B cell (primary cell): ENCODE measurements at regions of chr7 and their contacts with region 1.

Region 1: GRCh38 chr7:141014524-141015395 is at the start of gene MRPS33:
- DNase-seq: peak; percentile 98
- ATAC-seq: peak; percentile 98
- H3K4me3 ChIP-seq: peak within 1 kb of the TSS; percentile 64 to 83 (median 74)
- H3K4me3 Mint-ChIP-seq: peak within 1 kb of the TSS; percentile 100
- H3K27ac ChIP-seq: peak within 1 kb of the TSS; percentile 96 to 99
- H3K27ac Mint-ChIP-seq: peak within 1 kb of the TSS; percentile 100
- H3K4me1 ChIP-seq: peaks cover 10 to 11% of the 10 kb centered on the region in 2 donors
- H3K4me1 Mint-ChIP-seq: peaks cover 27% of the 10 kb centered on the region
- H3K27me3 ChIP-seq: peaks cover 0 to 7% (median 0%) of the 10 kb centered on the region in 4 experiments
- H3K27me3 Mint-ChIP-seq: peaks cover 16% of the 10 kb centered on the region
- CTCF ChIP-seq: peak; percentile 69
- total RNA-seq, gene MRPS33: 25.3 and 30.1 TPM in 2 replicates

Region 2: GRCh38 chr7:139598445-139599049 is 1416.2 kb before region 1 on chr7:
- CTCF ChIA-PET with region 1: no interaction called
- POLR2A ChIA-PET with region 1: no interaction called
- intact Hi-C with region 1: no loop called
- DNase-seq: no peak
- ATAC-seq: no peak
- H3K4me3 ChIP-seq: no peak overlapping the region
- H3K4me3 Mint-ChIP-seq: no peak overlapping the region
- H3K27ac ChIP-seq: no peak overlapping the region
- H3K27ac Mint-ChIP-seq: no peak overlapping the region
- H3K4me1 ChIP-seq: no peaks in the 10 kb centered on the region
- H3K4me1 Mint-ChIP-seq: no peaks in the 10 kb centered on the region
- H3K27me3 ChIP-seq: no peaks in the 10 kb centered on the region
- H3K27me3 Mint-ChIP-seq: no peaks in the 10 kb centered on the region
- CTCF ChIP-seq: no peak

Region 3: GRCh38 chr7:140397784-140398750 is 616.7 kb before region 1 on chr7 and contains the start of gene SLC37A3:
- CTCF ChIA-PET with region 1: no interaction called
- POLR2A ChIA-PET with region 1: no interaction called
- intact Hi-C with region 1: loop called (anchors 2 kb)
- DNase-seq: peak; percentile 86
- ATAC-seq: peak; percentile 97
- H3K4me3 ChIP-seq: peak within 1 kb of the TSS; percentile 62 to 69 (median 67)
- H3K4me3 Mint-ChIP-seq: peak within 1 kb of the TSS; percentile 98
- H3K27ac ChIP-seq: peak within 1 kb of the TSS in 1 of 2 donors; percentile 75
- H3K27ac Mint-ChIP-seq: peak within 1 kb of the TSS; percentile 83
- H3K4me1 ChIP-seq: peaks cover 7 to 11% of the 10 kb centered on the region in 2 donors
- H3K4me1 Mint-ChIP-seq: peaks cover 13% of the 10 kb centered on the region
- H3K27me3 ChIP-seq: no peaks in the 10 kb centered on the region
- H3K27me3 Mint-ChIP-seq: peaks cover 3% of the 10 kb centered on the region
- CTCF ChIP-seq: no peak
- total RNA-seq, gene SLC37A3: 20.1 TPM in 2 replicates

Region 4: DNA sequence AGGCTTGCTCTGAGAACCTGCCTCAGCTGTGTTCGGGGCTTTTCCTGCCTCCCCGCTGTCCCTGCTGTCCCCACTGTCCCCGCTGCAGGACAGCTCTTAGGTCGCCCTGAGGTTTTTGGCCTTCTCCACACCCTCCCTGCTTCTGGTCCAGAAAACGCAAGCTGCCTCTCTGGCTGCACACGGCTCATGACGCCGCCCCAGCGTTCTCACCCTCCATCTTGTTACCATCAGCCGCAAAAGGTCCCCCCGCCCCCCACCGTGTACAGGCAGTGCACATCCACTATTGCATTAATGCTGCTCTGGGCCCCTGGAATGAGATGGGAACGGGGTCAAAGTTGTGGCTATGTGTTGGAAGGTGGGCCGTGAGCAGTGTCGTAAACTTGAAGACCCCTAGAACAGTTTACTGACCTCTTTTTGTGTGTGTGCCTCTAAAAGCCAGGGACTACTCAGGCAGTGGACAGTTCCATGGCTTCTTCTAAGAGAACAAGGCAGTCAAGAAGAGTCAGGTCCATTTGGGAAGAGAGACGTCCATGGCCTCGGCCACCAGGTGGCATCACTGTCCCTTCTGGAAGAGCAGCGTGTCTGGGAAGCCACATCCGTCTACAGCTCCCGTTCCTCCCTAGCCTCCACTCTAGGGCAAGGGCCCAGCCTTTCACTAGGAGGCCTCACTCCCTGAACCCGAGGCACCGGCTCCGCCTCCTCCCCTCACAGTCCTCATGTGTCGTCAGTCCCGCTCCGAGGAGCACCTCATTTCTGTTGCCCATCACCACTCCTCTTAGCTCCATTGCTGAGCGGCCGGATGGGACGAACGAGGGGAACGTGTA is 497.0 kb before region 1 on chr7:
- CTCF ChIA-PET with region 1: interaction called, 54 read pairs
- POLR2A ChIA-PET with region 1: no interaction called
- intact Hi-C with region 1: loop called (anchors 1 kb)
- DNase-seq: peak; percentile 76
- ATAC-seq: peak; percentile 67
- H3K4me3 ChIP-seq: no peak overlapping the region
- H3K4me3 Mint-ChIP-seq: peak overlapping the region; percentile 62
- H3K27ac ChIP-seq: no peak overlapping the region
- H3K27ac Mint-ChIP-seq: no peak overlapping the region
- H3K4me1 ChIP-seq: peaks cover 0 to 5% of the 10 kb centered on the region in 2 donors
- H3K4me1 Mint-ChIP-seq: peaks cover 4% of the 10 kb centered on the region
- H3K27me3 ChIP-seq: peaks cover 0 to 3% (median 0%) of the 10 kb centered on the region in 4 experiments
- H3K27me3 Mint-ChIP-seq: peaks cover 21% of the 10 kb centered on the region
- CTCF ChIP-seq: peak; percentile 75

Region 5: DNA sequence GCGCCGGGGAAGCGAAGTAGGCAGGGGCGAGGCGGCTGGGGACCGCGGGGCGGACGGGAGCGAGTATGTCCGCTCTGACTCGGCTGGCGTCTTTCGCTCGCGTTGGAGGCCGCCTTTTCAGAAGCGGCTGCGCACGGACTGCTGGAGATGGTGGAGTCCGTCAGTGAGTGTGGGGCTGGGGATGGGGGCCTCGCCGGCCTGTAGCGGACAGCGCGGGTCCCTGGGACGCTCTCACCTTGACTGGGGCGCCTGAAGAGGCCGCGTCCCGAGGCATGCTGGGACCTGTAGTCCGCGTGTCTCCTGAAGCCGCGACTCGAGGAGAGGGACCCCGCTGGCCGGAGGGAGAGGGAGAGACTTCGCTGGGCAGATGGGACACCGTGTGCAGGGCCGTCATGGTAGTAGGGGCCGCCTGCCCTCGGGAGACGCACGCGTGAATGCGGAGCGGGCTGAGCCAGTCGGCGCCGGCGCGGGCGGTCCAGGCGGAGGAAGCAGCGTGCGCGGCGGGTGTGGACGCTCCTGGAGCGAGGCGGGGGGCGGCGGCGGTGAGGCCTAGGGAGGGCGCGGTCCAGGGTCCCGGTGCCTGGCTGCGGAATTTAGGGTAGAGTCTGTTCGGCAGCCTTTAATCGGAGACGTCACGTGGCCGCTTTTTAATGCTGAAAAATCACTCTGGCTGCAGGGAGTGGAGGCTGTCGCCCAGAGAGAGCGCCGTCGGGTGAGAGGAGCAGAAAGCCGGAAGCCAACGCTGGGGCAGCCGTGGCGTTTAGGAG is 317.9 kb before region 1 on chr7 and contains the start of gene NDUFB2:
- CTCF ChIA-PET with region 1: no interaction called
- POLR2A ChIA-PET with region 1: no interaction called
- intact Hi-C with region 1: loop called (anchors 1 kb)
- DNase-seq: peak; percentile 93
- ATAC-seq: peak; percentile 85
- H3K4me3 ChIP-seq: peak within 1 kb of the TSS; percentile 55 to 97 (median 94)
- H3K4me3 Mint-ChIP-seq: peak within 1 kb of the TSS; percentile 99
- H3K27ac ChIP-seq: peak within 1 kb of the TSS; percentile 84
- H3K27ac Mint-ChIP-seq: peak within 1 kb of the TSS; percentile 97
- H3K4me1 ChIP-seq: peaks cover 15 to 21% of the 10 kb centered on the region in 2 donors
- H3K4me1 Mint-ChIP-seq: peaks cover 37% of the 10 kb centered on the region
- H3K27me3 ChIP-seq: no peaks in the 10 kb centered on the region
- H3K27me3 Mint-ChIP-seq: no peaks in the 10 kb centered on the region
- CTCF ChIP-seq: no peak
- total RNA-seq, gene NDUFB2: 67.9 and 77.3 TPM in 2 replicates

Region 6: GRCh38 chr7:140924019-140924820 is 90.5 kb before region 1 on chr7:
- CTCF ChIA-PET with region 1: interaction called, 6 read pairs
- POLR2A ChIA-PET with region 1: no interaction called
- intact Hi-C with region 1: loop called (anchors 1 kb)
- DNase-seq: peak; percentile 97
- ATAC-seq: peak; percentile 74
- H3K4me3 ChIP-seq: peak overlapping the region; percentile 73 to 92 (median 92)
- H3K4me3 Mint-ChIP-seq: no peak overlapping the region
- H3K27ac ChIP-seq: peak overlapping the region; percentile 93 to 98
- H3K27ac Mint-ChIP-seq: no peak overlapping the region
- H3K4me1 ChIP-seq: peaks cover 16 to 27% of the 10 kb centered on the region in 2 donors
- H3K4me1 Mint-ChIP-seq: peaks cover 21% of the 10 kb centered on the region
- H3K27me3 ChIP-seq: no peaks in the 10 kb centered on the region
- H3K27me3 Mint-ChIP-seq: no peaks in the 10 kb centered on the region
- CTCF ChIP-seq: peak; percentile 48

Region 7: GRCh38 chr7:140961117-140961516 is 53.6 kb before region 1 on chr7:
- CTCF ChIA-PET with region 1: no interaction called
- POLR2A ChIA-PET with region 1: no interaction called
- intact Hi-C with region 1: no loop called
- DNase-seq: no peak
- ATAC-seq: no peak
- H3K4me3 ChIP-seq: no peak overlapping the region
- H3K4me3 Mint-ChIP-seq: no peak overlapping the region
- H3K27ac ChIP-seq: no peak overlapping the region
- H3K27ac Mint-ChIP-seq: no peak overlapping the region
- H3K4me1 ChIP-seq: no peaks in the 10 kb centered on the region
- H3K4me1 Mint-ChIP-seq: no peaks in the 10 kb centered on the region
- H3K27me3 ChIP-seq: peaks cover 0 to 5% (median 0%) of the 10 kb centered on the region in 4 experiments
- H3K27me3 Mint-ChIP-seq: peaks cover 4% of the 10 kb centered on the region
- CTCF ChIP-seq: no peak

Region 8: DNA sequence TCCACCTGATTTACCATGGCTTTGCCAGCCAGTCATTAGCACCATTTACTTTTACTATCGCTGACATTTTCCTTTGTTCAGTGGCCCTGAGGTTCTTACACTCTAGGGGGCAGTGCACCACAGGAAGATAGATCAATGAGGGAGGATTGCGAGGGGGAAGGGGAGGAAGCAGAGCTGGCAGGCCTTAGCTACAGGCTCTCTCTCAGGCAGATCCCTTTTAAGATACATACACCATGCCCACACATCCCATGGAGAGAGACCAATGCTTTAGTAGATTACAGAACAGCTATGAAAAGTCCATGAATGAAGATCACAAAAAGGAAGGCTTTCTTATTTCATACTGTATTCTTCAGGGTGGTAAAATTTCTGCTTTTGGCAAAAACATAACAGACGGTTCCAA is 639.8 kb after region 1 on chr7:
- CTCF ChIA-PET with region 1: interaction called, 20 read pairs
- POLR2A ChIA-PET with region 1: no interaction called
- intact Hi-C with region 1: loop called (anchors 1 kb)
- DNase-seq: peak; percentile 75
- ATAC-seq: peak; percentile 72
- H3K4me3 ChIP-seq: no peak overlapping the region
- H3K4me3 Mint-ChIP-seq: no peak overlapping the region
- H3K27ac ChIP-seq: peak overlapping the region in 1 of 2 donors; percentile 7
- H3K27ac Mint-ChIP-seq: peak overlapping the region; percentile 51
- H3K4me1 ChIP-seq: peaks cover 2 to 7% of the 10 kb centered on the region in 2 donors
- H3K4me1 Mint-ChIP-seq: peaks cover 13% of the 10 kb centered on the region
- H3K27me3 ChIP-seq: no peaks in the 10 kb centered on the region
- H3K27me3 Mint-ChIP-seq: no peaks in the 10 kb centered on the region
- CTCF ChIP-seq: peak; percentile 72

Region 9: DNA sequence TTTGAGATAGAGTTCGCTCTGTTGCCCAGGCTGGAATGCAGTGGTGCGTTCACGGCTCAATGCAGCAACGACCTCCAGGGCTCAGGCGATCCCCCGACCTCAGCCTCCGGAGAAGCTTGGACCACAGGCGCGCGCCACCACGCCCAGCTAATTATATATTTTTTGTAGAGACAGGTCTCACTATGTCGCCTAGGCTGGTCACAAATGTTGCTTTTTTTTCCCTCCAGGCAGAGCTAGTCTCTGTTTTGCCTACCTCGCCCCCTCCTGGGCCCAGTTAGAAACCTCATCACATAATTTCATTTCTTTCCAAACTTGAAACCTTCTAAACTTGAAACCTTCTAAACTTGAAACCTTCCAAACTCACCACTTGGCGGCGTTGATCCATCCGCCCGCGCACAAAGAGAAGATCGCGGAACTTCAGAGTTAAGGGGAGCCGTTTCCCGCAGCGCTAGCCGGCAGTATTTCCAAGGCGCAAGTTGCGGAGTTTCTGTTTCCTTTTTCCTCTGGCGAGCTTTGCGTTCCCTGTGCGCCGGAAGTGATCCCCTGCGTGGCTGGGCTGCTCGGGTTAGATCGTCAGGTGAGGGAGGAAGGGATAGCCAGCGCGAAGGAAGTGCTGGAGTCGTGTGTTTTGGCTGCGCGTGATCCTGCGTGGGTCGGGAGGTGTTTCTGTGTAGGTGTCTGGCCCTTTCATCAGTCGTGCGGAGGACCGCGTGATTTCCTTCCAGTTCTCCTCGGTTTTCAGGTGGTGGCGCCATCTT is 723.3 kb after region 1 on chr7 and contains the start of gene SSBP1:
- CTCF ChIA-PET with region 1: interaction called, 12 read pairs
- POLR2A ChIA-PET with region 1: interaction called, 7 read pairs
- intact Hi-C with region 1: no loop called
- DNase-seq: peak; percentile 97
- ATAC-seq: peak; percentile 86
- H3K4me3 ChIP-seq: peak within 1 kb of the TSS; percentile 66 to 93 (median 90)
- H3K4me3 Mint-ChIP-seq: peak within 1 kb of the TSS; percentile 95
- H3K27ac ChIP-seq: peak within 1 kb of the TSS; percentile 84 to 92
- H3K27ac Mint-ChIP-seq: peak within 1 kb of the TSS; percentile 97
- H3K4me1 ChIP-seq: peaks cover 19 to 20% of the 10 kb centered on the region in 2 donors
- H3K4me1 Mint-ChIP-seq: peaks cover 37% of the 10 kb centered on the region
- H3K27me3 ChIP-seq: no peaks in the 10 kb centered on the region
- H3K27me3 Mint-ChIP-seq: no peaks in the 10 kb centered on the region
- CTCF ChIP-seq: peak; percentile 92
- total RNA-seq, gene SSBP1: 89.1 and 93.6 TPM in 2 replicates